Colonic mucosa (tissue), 4 donors: ENCODE measurements at regions of chr9 and their contacts with region 1.

Region 1: DNA sequence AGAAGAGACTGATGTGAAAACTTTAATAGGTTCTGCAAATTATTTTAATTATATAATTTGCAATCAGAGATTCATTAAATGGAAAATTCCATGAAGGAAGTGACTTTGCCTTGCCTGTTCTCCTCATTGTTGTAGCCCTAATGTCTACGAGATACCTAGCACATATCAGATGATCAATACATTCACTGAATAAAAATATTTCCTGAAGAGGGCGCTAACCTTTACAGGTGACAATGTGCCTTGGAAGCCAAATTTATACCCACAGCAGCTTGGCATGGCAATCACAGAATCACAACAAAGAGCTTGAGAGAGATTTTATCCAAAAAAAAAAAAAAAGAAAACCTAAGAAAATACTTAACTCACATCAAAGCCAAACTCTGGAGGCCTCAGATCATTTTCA is 17.4 kb downstream of the HAUS6 start:
- DNase-seq: no peak
- H3K4me3 ChIP-seq: no peak overlapping the region
- H3K27ac ChIP-seq: no peak overlapping the region
- H3K4me1 ChIP-seq: no peaks in the 10 kb centered on the region
- H3K27me3 ChIP-seq: no peaks in the 10 kb centered on the region
- CTCF ChIP-seq: peak; percentile 24

Region 2: DNA sequence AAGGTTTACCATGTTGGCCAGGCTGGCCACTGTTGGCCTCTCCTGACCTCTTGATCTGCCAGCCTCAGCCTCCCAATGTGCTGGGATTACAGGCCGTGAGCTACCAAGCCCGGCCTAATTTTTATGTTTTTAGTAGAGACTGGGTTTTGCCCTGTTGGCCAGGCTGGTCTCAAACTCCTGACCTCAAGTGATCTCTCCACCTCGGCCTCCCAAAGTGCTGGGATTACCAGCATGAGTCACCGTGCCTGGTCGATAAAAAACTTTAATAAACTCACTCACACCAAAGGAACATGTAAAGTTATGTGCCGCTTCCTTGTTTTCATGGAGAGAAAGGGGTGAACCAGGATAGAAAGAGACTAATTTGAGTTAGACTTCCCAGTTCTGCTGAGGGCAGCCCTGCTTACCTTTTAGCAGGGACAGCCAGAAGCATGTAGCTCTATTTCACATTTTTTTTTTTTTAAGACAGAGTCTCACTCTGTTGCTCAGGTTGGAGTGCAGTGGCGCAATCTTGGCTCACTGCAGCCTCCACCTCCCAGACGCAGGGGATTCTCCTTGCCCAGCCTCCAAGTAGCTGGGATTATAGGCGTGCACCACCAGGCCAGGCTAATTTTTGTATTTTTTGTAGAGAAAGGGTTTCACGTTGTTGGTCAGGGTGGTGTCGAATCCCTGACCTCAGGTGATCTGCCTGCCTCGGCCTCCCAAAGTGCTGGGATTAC is 28.8 kb after region 1 on chr9:
- intact Hi-C with region 1: no loop called
- DNase-seq: no peak
- H3K4me3 ChIP-seq: no peak overlapping the region
- H3K27ac ChIP-seq: no peak overlapping the region
- H3K4me1 ChIP-seq: no peaks in the 10 kb centered on the region
- H3K27me3 ChIP-seq: no peaks in the 10 kb centered on the region
- CTCF ChIP-seq: no peak

Region 3: DNA sequence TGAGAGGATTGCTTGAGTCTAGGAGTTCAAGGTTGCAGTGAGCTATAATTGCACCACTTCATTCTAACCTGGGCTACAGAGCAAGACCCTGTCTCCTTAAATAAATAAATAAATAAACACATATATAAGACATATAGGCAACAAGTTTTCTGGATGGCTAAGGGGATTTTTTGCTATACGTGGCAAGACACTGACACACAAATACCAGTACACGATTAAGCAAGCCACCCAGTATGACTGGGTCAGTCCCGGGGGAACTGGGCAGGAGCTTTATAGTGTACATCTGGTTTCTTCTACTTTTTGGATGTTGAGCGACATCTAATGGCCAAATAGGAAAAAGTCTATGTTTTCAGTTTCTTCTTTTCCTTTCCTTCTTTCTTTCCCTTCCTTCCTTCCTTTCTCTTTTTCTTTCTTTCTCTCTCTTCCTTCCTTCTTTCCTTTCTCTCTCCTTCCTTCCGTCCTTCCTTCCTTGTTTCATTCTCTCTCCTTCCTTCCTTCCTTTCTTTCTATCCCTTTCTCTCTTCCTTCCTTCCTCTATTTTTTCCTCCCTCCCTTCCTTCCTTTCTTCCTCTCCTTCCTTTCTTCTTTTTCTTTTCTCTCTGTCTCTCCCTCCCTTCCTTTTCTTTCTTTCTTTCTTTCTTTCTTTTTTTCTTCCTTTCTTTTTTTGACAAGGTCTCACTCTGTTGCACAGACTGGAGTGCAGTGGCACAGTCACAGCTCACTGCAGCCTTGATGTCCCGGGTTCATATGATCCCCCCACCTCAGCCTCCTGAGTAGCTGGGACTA is 89.0 kb after region 1 on chr9:
- intact Hi-C with region 1: loop called (anchors 10 kb)
- DNase-seq: peak; percentile 41
- H3K4me3 ChIP-seq: no peak overlapping the region
- H3K27ac ChIP-seq: no peak overlapping the region
- H3K4me1 ChIP-seq: no peaks in the 10 kb centered on the region
- H3K27me3 ChIP-seq: no peaks in the 10 kb centered on the region
- CTCF ChIP-seq: peak; percentile 23

Region 4: GRCh38 chr9:19369107-19369506 is 283.8 kb after region 1 on chr9:
- intact Hi-C with region 1: loop called (anchors 10 kb)
- DNase-seq: no peak
- H3K4me3 ChIP-seq: no peak overlapping the region
- H3K27ac ChIP-seq: no peak overlapping the region
- H3K4me1 ChIP-seq: no peaks in the 10 kb centered on the region
- H3K27me3 ChIP-seq: no peaks in the 10 kb centered on the region
- CTCF ChIP-seq: no peak

Region 5: GRCh38 chr9:19456996-19457692 is 371.8 kb after region 1 on chr9:
- intact Hi-C with region 1: loop called (anchors 10 kb)
- DNase-seq: peak; percentile 78
- H3K4me3 ChIP-seq: no peak overlapping the region
- H3K27ac ChIP-seq: no peak overlapping the region
- H3K4me1 ChIP-seq: no peaks in the 10 kb centered on the region
- H3K27me3 ChIP-seq: no peaks in the 10 kb centered on the region
- CTCF ChIP-seq: peak; percentile 95